CD4-positive, alpha-beta T cell (primary cell): ENCODE measurements at regions of chr10 and their contacts with region 1.

Region 1: DNA sequence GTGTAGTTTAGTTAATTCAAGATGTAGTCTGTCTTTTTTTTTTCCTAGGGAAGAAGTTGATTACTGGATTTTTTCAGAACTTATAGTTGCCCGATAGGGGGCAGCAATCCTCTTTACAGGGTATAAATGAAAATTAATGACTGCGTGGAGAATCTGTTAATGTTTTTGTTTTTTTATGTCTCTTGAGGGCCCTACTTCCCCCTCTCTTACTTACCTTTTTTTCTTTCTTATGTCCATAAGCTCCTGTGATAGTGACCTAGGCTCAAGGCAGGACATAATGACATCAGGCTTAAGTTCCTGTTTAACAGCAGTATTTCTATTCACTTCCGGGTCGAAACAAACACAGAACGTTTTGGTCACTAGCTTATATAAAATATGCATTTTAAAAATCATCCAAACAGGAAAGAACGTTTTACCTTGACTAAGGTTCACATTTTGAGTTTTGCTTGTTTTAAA is 18.8 kb downstream of the CDC123 start:
- DNase-seq: peak in 9 of 14 experiments; percentile 8 to 77 (median 36)
- ATAC-seq: peak; percentile 52
- H3K4me3 ChIP-seq: peak overlapping the region; percentile 20
- H3K4me3 Mint-ChIP-seq: peak overlapping the region; percentile 62
- H3K27ac ChIP-seq: no peak overlapping the region
- H3K27ac Mint-ChIP-seq: peak overlapping the region; percentile 76
- H3K4me1 ChIP-seq: no peaks in the 10 kb centered on the region
- H3K4me1 Mint-ChIP-seq: peaks cover 29% of the 10 kb centered on the region
- H3K27me3 ChIP-seq: no peaks in the 10 kb centered on the region
- H3K27me3 Mint-ChIP-seq: no peaks in the 10 kb centered on the region
- CTCF ChIP-seq: peak; percentile 86

Region 2: GRCh38 chr10:12201543-12201942 is 13.2 kb before region 1 on chr10:
- CTCF ChIA-PET with region 1: interaction called, 20 read pairs
- POLR2A ChIA-PET with region 1: interaction called, 5 read pairs
- intact Hi-C with region 1: no loop called
- DNase-seq: no peak
- ATAC-seq: no peak
- H3K4me3 ChIP-seq: no peak overlapping the region
- H3K4me3 Mint-ChIP-seq: no peak overlapping the region
- H3K27ac ChIP-seq: no peak overlapping the region
- H3K27ac Mint-ChIP-seq: no peak overlapping the region
- H3K4me1 ChIP-seq: peaks cover 12% of the 10 kb centered on the region
- H3K4me1 Mint-ChIP-seq: peaks cover 48% of the 10 kb centered on the region
- H3K27me3 ChIP-seq: no peaks in the 10 kb centered on the region
- H3K27me3 Mint-ChIP-seq: no peaks in the 10 kb centered on the region
- CTCF ChIP-seq: no peak

Region 3: DNA sequence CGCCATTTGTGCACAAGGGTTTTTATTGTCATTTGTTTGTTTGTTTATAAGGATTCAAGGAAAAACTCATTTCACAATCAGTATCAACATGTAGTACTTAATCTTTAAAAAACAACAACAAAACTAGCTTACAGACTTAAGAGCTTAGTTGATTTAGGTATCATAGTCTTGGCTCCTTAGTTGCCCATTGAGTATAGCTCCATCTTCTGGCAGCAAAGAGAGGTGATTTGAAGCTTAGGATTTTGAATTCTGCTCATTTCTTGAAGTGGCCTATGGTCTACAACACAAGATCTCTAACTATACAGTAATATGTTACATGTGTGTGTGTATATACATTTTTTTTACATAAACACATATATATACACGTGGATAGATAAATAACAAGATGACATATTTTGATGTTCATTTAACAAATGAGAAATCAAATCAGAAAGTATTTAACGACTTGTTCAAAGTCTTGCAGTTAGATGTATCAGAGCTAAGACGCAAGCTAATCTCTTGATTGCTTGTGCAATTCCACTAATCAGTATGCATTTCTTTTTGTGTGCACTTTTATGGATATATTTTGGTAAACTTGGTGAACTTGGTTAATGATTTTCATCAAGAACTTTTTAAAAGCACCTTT is 441.8 kb after region 1 on chr10:
- CTCF ChIA-PET with region 1: interaction called, 14 read pairs
- POLR2A ChIA-PET with region 1: no interaction called
- intact Hi-C with region 1: loop called in 1 of 2 experiments (anchors 2 kb)
- DNase-seq: peak in 4 of 14 experiments; percentile 10 to 71 (median 70)
- ATAC-seq: peak; percentile 86
- H3K4me3 ChIP-seq: no peak overlapping the region
- H3K4me3 Mint-ChIP-seq: peak overlapping the region; percentile 23
- H3K27ac ChIP-seq: no peak overlapping the region
- H3K27ac Mint-ChIP-seq: no peak overlapping the region
- H3K4me1 ChIP-seq: peaks cover 4% of the 10 kb centered on the region
- H3K4me1 Mint-ChIP-seq: peaks cover 8% of the 10 kb centered on the region
- H3K27me3 ChIP-seq: no peaks in the 10 kb centered on the region
- H3K27me3 Mint-ChIP-seq: no peaks in the 10 kb centered on the region
- CTCF ChIP-seq: peak; percentile 75

Region 4: GRCh38 chr10:12710594-12711349 is 496.0 kb after region 1 on chr10:
- CTCF ChIA-PET with region 1: interaction called, 11 read pairs
- POLR2A ChIA-PET with region 1: no interaction called
- intact Hi-C with region 1: loop called (anchors 1 to 5 kb)
- DNase-seq: peak; percentile 50 to 83 (median 68)
- ATAC-seq: peak; percentile 92
- H3K4me3 ChIP-seq: no peak overlapping the region
- H3K4me3 Mint-ChIP-seq: no peak overlapping the region
- H3K27ac ChIP-seq: no peak overlapping the region
- H3K27ac Mint-ChIP-seq: no peak overlapping the region
- H3K4me1 ChIP-seq: no peaks in the 10 kb centered on the region
- H3K4me1 Mint-ChIP-seq: peaks cover 14% of the 10 kb centered on the region
- H3K27me3 ChIP-seq: no peaks in the 10 kb centered on the region
- H3K27me3 Mint-ChIP-seq: no peaks in the 10 kb centered on the region
- CTCF ChIP-seq: peak; percentile 96

Region 5: GRCh38 chr10:12902135-12902572 is 687.4 kb after region 1 on chr10:
- CTCF ChIA-PET with region 1: interaction called, 4 read pairs
- POLR2A ChIA-PET with region 1: interaction called, 4 read pairs
- intact Hi-C with region 1: loop called (anchors 2 to 5 kb)
- DNase-seq: peak in 13 of 14 experiments; percentile 3 to 68 (median 22)
- ATAC-seq: no peak
- H3K4me3 ChIP-seq: no peak overlapping the region
- H3K4me3 Mint-ChIP-seq: no peak overlapping the region
- H3K27ac ChIP-seq: no peak overlapping the region
- H3K27ac Mint-ChIP-seq: no peak overlapping the region
- H3K4me1 ChIP-seq: no peaks in the 10 kb centered on the region
- H3K4me1 Mint-ChIP-seq: no peaks in the 10 kb centered on the region
- H3K27me3 ChIP-seq: peaks cover 0 to 2% of the 10 kb centered on the region in 2 experiments
- H3K27me3 Mint-ChIP-seq: peaks cover 20% of the 10 kb centered on the region
- CTCF ChIP-seq: peak; percentile 75